ENCODE measurements at regions of chr20 and their contacts with region 1.

Region 1: DNA sequence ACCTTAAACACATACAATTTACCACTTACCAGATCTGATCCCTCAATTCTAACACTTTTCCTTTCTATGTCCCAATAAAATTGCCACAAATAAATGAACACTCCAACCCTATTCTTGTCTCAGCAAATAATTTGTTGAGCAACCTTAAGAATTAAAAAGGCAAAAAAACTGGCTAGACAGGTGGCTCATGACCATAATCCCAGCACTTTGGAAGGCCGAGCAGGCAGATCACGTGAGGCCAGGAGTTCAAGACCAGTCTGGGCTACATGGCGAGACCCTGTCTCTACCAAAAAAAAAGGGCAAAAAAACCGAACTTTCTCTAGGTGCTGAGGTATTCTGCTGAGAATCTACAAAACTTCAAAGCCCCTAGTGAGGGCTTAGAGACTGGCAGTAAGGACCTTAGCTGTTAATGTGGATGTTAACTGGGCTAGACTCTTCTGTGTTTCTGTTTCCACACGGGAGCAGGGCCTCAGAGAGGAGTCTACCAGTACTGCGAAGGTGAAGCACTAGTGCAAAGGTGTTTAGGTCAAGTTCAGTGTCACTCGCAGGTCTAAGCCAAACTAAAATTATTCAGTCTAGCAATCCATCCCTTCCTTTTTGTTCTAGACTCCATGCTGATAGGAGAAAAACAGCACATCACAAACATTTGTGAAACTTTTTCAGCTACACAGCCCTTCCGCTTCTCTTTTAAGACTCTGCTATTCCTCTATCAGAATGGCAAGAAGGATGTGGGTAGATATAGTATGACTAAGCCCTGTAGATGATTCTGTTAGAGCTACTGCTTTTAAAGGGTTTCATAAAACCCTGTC is 2.6 kb downstream of the FASTKD5 start:
- DNase-seq: no peak
- ATAC-seq: peak; percentile 81
- H3K4me3 Mint-ChIP-seq: peak overlapping the region; percentile 92
- H3K27ac Mint-ChIP-seq: peak overlapping the region; percentile 81
- H3K4me1 Mint-ChIP-seq: peaks cover 45% of the 10 kb centered on the region
- H3K27me3 Mint-ChIP-seq: no peaks in the 10 kb centered on the region

Region 2: DNA sequence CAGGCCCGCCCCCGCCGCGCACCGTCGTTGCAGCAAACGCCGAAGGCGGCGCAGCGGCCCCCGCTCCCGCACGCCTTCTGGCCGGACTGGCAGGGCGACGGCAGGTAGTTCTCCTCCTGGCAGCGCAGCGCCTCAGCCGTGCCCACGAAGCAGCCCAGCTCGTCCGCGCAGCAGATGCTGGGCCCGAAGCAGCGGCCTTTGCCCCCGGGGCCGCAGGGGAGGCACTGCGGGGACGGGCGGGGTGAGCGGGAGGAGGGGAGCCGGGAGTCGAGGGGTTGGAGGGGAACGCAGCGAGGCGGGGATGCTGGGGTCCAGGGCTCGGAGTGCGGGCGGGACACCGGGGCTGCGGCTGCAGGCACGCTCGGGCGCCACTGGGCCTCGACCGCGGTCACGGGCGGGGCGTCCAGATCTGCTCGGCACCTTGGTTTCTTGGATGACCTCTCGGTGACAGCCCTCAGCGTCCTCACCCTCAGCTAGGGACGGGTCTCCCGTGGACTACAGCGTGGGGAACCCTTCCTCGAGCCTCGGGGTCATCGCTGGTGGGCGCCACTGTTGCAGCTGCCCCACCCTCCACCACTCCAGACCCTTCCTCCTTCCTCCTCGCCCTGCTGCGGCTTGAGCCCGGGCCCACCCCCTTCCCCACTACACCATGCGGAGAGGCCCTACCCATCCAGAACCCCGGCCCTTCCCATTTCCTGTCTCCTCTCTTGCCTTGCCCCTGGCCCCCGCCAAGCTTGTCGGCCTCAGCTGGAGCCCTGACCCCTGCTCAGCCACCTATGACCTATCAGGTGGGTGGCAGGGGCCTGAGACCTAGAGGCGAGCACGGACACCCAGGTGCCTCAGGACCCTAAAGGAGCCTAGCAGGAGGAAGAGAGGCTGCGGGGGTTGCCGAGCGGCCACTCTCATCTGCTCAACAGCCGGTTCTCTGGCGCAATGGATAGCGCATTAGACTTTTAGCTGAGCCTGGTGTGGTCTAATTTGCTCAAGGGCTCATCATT is 73.8 kb before region 1 on chr20:
- CTCF ChIA-PET with region 1: no interaction called
- POLR2A ChIA-PET with region 1: no interaction called
- DNase-seq: no peak
- ATAC-seq: peak; percentile 34
- H3K4me3 Mint-ChIP-seq: no peak overlapping the region
- H3K27ac Mint-ChIP-seq: no peak overlapping the region
- H3K4me1 Mint-ChIP-seq: peaks cover 9% of the 10 kb centered on the region
- H3K27me3 Mint-ChIP-seq: peaks cover 52% of the 10 kb centered on the region

Region 3: GRCh38 chr20:3101737-3102574 is 55.1 kb before region 1 on chr20:
- CTCF ChIA-PET with region 1: no interaction called
- POLR2A ChIA-PET with region 1: no interaction called
- DNase-seq: peak; percentile 77
- ATAC-seq: peak; percentile 74
- H3K4me3 Mint-ChIP-seq: no peak overlapping the region
- H3K27ac Mint-ChIP-seq: no peak overlapping the region
- H3K4me1 Mint-ChIP-seq: peaks cover 16% of the 10 kb centered on the region
- H3K27me3 Mint-ChIP-seq: peaks cover 12% of the 10 kb centered on the region

Region 4: GRCh38 chr20:3172743-3173609 is 16.0 kb after region 1 on chr20 and contains the start of gene LZTS3:
- CTCF ChIA-PET with region 1: interaction called, 10 read pairs
- POLR2A ChIA-PET with region 1: interaction called, 11 read pairs
- DNase-seq: peak; percentile 84
- ATAC-seq: peak; percentile 91
- H3K4me3 Mint-ChIP-seq: peak within 1 kb of the TSS; percentile 80
- H3K27ac Mint-ChIP-seq: peak within 1 kb of the TSS; percentile 63
- H3K4me1 Mint-ChIP-seq: peaks cover 15% of the 10 kb centered on the region
- H3K27me3 Mint-ChIP-seq: peaks cover 48% of the 10 kb centered on the region
- total RNA-seq, gene LZTS3: 0.42 to 0.53 TPM

Region 5: DNA sequence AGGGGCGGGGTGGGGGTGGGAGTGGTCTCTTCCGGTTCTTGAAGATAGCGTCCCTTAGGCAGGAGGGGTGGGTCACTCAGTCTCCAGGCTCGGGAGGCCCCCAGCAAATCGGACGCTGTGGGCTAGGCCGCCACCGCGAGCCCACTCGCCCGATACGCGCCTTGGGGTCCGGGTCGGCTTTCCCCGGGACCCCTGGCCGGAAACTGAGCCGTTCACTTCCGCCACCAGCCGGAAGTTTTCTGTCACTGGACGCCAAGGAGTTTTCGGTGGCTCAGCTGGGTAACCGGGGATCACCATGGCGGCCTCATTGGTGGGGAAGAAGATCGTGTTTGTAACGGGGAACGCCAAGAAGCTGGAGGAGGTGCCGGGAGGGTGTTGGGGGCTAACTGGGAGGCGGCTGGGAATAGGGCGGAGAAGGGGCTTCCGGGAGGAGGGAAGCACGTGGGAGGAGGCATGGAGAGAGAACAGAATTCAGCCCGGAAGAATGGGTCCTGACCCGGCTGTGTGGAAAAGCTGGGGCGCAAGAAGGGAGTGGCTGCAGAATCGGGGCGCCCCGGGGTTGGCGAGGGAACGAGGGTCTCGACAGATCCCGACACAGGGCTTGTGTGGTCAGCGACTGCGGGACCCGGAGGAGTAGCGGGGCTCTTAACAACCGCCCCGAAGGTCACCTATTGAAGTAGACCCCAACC is 52.4 kb after region 1 on chr20 and contains the start of gene ITPA:
- CTCF ChIA-PET with region 1: no interaction called
- POLR2A ChIA-PET with region 1: interaction called, 10 read pairs
- DNase-seq: peak; percentile 75
- ATAC-seq: peak; percentile 54
- H3K4me3 Mint-ChIP-seq: peak within 1 kb of the TSS; percentile 83
- H3K27ac Mint-ChIP-seq: peak within 1 kb of the TSS; percentile 95
- H3K4me1 Mint-ChIP-seq: peaks cover 34% of the 10 kb centered on the region
- H3K27me3 Mint-ChIP-seq: no peaks in the 10 kb centered on the region
- total RNA-seq, gene ITPA: 53.2 to 60.7 TPM

Region 6: GRCh38 chr20:3239026-3239866 is 82.2 kb after region 1 on chr20 and contains the start of gene SLC4A11:
- CTCF ChIA-PET with region 1: no interaction called
- POLR2A ChIA-PET with region 1: no interaction called
- DNase-seq: peak; percentile 56
- ATAC-seq: peak; percentile 65
- H3K4me3 Mint-ChIP-seq: peak within 1 kb of the TSS; percentile 82
- H3K27ac Mint-ChIP-seq: no peak within 1 kb of the TSS
- H3K4me1 Mint-ChIP-seq: peaks cover 13% of the 10 kb centered on the region
- H3K27me3 Mint-ChIP-seq: peaks cover 51% of the 10 kb centered on the region
- total RNA-seq, gene SLC4A11: 1.6 to 2.8 TPM